ENCODE measurements at regions of chr2 and their contacts with region 1.

Region 1: DNA sequence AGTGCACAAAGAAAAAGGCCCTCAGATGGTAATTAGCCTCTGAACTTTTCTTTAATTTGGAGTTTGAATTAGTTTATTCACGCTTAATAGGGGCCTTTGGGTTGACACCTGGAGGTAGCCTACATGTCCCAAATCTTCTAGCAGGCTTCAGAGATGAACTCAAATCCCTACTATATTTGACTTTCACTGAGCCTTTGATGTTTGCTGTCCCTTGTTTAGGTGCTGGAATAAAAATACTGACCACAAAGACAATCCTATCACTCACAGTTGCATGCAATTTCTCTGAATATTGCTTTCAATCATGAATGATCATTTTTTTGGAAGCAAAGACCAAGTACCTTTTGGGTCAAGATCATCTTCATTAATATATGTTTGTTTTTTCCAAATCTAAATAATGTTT is 564.0 kb upstream of the FANCL start:
- DNase-seq: no peak

Region 2: GRCh38 chr2:58762176-58762781 is 42.8 kb before region 1 on chr2:
- in situ Hi-C with region 1: loop called (anchors 5 kb)
- DNase-seq: peak; percentile 84

Measured in SK-MEL-5 (cell line).